Dendritic cell treated with granulocyte-macrophage colony-stimulating factor and Interleukin-4, amounts not matched to agents 40 ng/mL and 50 ng/mL, for 4 days (primary cell): ENCODE measurements at regions of chr1 and their contacts with region 1.

Region 1: GRCh38 chr1:229341774-229342655 is 832 bp downstream of the CCSAP start:
- H3K4me3 Mint-ChIP-seq: peak overlapping the region; percentile 91
- H3K27ac Mint-ChIP-seq: peak overlapping the region; percentile 93
- H3K4me1 Mint-ChIP-seq: peaks cover 79% of the 10 kb centered on the region
- H3K27me3 Mint-ChIP-seq: peaks cover 11% of the 10 kb centered on the region

Region 2: DNA sequence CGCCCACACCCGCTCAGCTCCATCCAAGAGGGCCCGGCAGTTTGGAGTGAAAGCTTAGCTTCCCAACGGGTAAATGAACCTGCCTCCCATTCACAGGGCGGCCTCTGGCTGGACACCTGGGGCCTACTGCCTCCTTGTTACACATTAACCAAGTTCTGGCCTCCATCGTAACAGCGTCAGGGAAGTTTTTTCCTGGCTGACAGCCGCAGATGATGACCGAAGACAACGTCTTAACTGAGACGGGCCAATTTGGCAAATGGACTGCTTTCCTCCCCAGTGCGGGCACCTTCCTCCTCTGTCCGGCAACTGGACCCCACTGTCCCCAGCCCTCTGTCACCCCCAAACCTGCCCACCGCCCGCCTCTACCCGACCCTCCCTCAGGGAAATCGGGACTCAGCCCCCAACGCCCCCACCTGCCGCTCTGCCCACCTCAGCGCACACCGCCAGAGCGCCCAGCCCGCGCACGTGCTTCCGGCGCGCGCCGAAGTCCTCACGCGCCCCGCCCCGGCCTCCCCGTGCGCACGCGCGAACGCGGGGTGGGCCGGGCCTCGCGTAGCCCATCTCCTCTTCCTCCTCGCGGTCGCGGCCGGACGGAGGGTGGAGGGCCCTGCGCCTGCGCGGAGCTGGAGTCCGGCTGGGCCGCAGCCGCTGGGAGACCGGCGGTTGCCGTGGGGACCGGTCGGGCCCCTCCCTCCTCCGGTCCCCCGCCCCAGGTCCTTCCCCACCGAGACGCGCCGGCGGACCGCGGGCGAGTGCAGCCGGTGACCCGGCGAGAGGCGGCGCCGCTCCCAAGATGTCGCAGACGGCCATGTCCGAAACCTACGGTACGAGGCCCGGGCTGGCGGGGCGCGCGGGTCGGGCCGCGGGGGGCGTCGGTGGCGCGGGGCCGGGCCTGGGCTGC is 71.2 kb before region 1 on chr1 and contains the start of gene RAB4A:
- intact Hi-C with region 1: loop called (anchors 5 kb)
- H3K4me3 Mint-ChIP-seq: peak within 1 kb of the TSS; percentile 82
- H3K27ac Mint-ChIP-seq: peak within 1 kb of the TSS; percentile 88
- H3K4me1 Mint-ChIP-seq: peaks cover 55% of the 10 kb centered on the region
- H3K27me3 Mint-ChIP-seq: no peaks in the 10 kb centered on the region